HEK293T (cell line): ENCODE measurements at regions of chr1 and their contacts with region 1.

Region 1: DNA sequence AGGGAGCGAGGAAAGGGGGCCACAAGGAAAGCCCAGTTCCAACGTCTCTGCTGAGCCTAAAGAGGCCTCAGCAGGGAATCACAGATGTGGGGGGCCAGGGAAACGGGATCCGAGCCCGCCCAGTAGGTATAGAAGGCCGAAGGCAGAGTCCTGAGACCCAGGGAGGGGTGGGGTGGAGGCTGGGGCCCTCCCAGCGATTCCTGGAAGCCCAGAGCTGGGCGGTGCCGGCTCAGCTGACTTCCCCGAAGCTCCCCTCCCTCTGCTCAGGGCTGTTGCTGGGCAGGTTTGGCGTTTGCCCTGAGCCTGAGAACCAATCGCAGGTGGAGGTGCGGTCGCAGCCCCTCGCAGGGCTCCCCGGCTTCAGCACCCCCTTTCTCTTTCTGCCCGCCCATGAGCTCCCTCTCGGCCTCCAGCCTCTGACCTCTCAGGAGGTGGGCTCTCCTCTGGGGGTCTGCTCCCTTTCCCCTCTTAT is 12.8 kb downstream of the ADAMTSL4 start:
- DNase-seq: peak; percentile 89

Region 2: DNA sequence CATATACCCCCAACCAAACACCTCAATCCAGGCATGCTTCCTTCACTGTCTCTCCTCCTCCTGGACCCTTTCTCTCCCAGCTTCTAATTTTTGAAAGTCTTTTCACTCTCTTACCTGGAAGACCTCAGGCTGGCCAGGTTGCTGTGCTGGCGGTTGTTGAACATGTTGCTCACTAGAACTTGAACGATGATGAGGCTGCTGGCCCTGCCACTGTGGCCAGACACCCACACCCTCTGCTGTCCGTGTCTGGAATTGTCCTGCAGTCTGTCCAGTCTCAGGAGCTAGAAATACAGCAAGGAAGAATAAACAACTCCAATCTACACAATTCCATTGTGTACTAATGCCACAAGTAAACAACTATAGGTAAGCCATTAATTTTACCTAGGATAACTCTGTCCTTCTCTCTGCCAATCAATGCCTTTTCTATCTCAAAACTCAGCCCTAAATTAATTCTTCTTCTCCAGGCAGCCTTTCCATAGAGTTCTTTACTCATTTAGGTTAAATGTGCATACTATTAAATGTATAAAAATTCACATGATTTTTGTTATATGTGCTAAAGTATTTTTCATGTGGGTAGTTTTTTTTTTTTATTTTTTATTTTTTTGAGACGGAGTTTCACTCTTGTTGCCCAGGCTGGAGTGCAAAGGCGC is 251.2 kb after region 1 on chr1:
- CTCF ChIA-PET with region 1: interaction called, 11 read pairs
- POLR2A ChIA-PET with region 1: no interaction called
- DNase-seq: peak; percentile 74